Right lobe of liver (tissue), 6 donors: ENCODE measurements at regions of chr2 and their contacts with region 1.

Region 1: GRCh38 chr2:172931918-172932520 is 143.6 kb upstream of the MAP3K20 start:
- DNase-seq: peak in 2 of 3 donors; percentile 63 to 64
- ATAC-seq: peak; percentile 41 to 50 (median 48)
- H3K4me3 ChIP-seq: no peak overlapping the region
- H3K27ac ChIP-seq: no peak overlapping the region
- H3K4me1 ChIP-seq: peaks cover 0 to 16% (median 3%) of the 10 kb centered on the region in 4 donors
- H3K27me3 ChIP-seq: no peaks in the 10 kb centered on the region
- CTCF ChIP-seq: peak; percentile 56 to 67 (median 62)
- POLR2A ChIP-seq: no peak

Region 2: GRCh38 chr2:172806493-172806892 is 125.5 kb before region 1 on chr2:
- intact Hi-C with region 1: loop called (anchors 5 kb)
- DNase-seq: no peak
- ATAC-seq: peak; percentile 81 to 91 (median 86)
- H3K4me3 ChIP-seq: no peak overlapping the region
- H3K27ac ChIP-seq: no peak overlapping the region
- H3K4me1 ChIP-seq: no peaks in the 10 kb centered on the region
- H3K27me3 ChIP-seq: no peaks in the 10 kb centered on the region
- CTCF ChIP-seq: peak; percentile 79 to 89 (median 86)
- POLR2A ChIP-seq: no peak

Region 3: GRCh38 chr2:172813314-172813888 is 118.6 kb before region 1 on chr2:
- intact Hi-C with region 1: loop called (anchors 5 kb)
- DNase-seq: no peak
- ATAC-seq: peak; percentile 53 to 76 (median 61)
- H3K4me3 ChIP-seq: no peak overlapping the region
- H3K27ac ChIP-seq: no peak overlapping the region
- H3K4me1 ChIP-seq: no peaks in the 10 kb centered on the region
- H3K27me3 ChIP-seq: no peaks in the 10 kb centered on the region
- CTCF ChIP-seq: peak; percentile 37 to 52 (median 40)
- POLR2A ChIP-seq: no peak

Region 4: GRCh38 chr2:172829229-172829628 is 102.8 kb before region 1 on chr2:
- intact Hi-C with region 1: loop called in 1 of 2 experiments (anchors 5 kb)
- DNase-seq: no peak
- ATAC-seq: no peak
- H3K4me3 ChIP-seq: no peak overlapping the region
- H3K27ac ChIP-seq: no peak overlapping the region
- H3K4me1 ChIP-seq: no peaks in the 10 kb centered on the region
- H3K27me3 ChIP-seq: no peaks in the 10 kb centered on the region
- CTCF ChIP-seq: no peak
- POLR2A ChIP-seq: no peak